ENCODE measurements at regions of chr20 and their contacts with region 1.

Region 1: GRCh38 chr20:6265204-6265904 is 142.5 kb upstream of the FERMT1 start:
- DNase-seq: peak; percentile 55
- ATAC-seq: peak; percentile 68
- H3K4me3 ChIP-seq: no peak overlapping the region
- H3K27ac ChIP-seq: no peak overlapping the region
- H3K4me1 ChIP-seq: no peaks in the 10 kb centered on the region
- H3K27me3 ChIP-seq: peaks cover 0 to 2% of the 10 kb centered on the region in 2 experiments; a peak in 1 of 5 replicates
- CTCF ChIP-seq: peak; percentile 67
- EP300 ChIP-seq: no peak
- POLR2A ChIP-seq: no peak
- RAD21 ChIP-seq: peak; percentile 62; the same call in 1 of the 2 replicates

Region 2: GRCh38 chr20:6558341-6558740 is 293.0 kb after region 1 on chr20:
- CTCF ChIA-PET with region 1: no interaction called
- POLR2A ChIA-PET with region 1: no interaction called
- in situ Hi-C with region 1: no loop called
- intact Hi-C with region 1: loop called (anchors 1 kb)
- DNase-seq: peak; percentile 19
- ATAC-seq: peak; percentile 62
- H3K4me3 ChIP-seq: no peak overlapping the region
- H3K27ac ChIP-seq: no peak overlapping the region
- H3K4me1 ChIP-seq: peaks cover 7% of the 10 kb centered on the region; the same call in 1 of the 2 replicates
- H3K27me3 ChIP-seq: no peaks in the 10 kb centered on the region
- CTCF ChIP-seq: peak; percentile 43
- EP300 ChIP-seq: no peak
- POLR2A ChIP-seq: no peak
- RAD21 ChIP-seq: no peak

Region 3: GRCh38 chr20:6626805-6627204 is 361.5 kb after region 1 on chr20:
- CTCF ChIA-PET with region 1: no interaction called
- POLR2A ChIA-PET with region 1: no interaction called
- in situ Hi-C with region 1: no loop called
- intact Hi-C with region 1: loop called (anchors 5 kb)
- DNase-seq: peak; percentile 18
- ATAC-seq: peak; percentile 62
- H3K4me3 ChIP-seq: no peak overlapping the region
- H3K27ac ChIP-seq: no peak overlapping the region
- H3K4me1 ChIP-seq: peaks cover 9% of the 10 kb centered on the region
- H3K27me3 ChIP-seq: no peaks in the 10 kb centered on the region
- CTCF ChIP-seq: peak; percentile 32; the same call in 1 of the 2 replicates
- EP300 ChIP-seq: no peak
- POLR2A ChIP-seq: no peak
- RAD21 ChIP-seq: no peak

Measured in HepG2 (cell line).